Left lung (tissue), 14 donors: ENCODE measurements at regions of chr4 and their contacts with region 1.

Region 1: GRCh38 chr4:52983563-52984303 is 121.6 kb downstream of the RASL11B start:
- DNase-seq: peak in 2 of 4 donors; percentile 47 to 64
- ATAC-seq: peak; percentile 91
- H3K4me3 ChIP-seq: no peak overlapping the region
- H3K27ac ChIP-seq: no peak overlapping the region
- H3K4me1 ChIP-seq: peaks cover 0 to 6% of the 10 kb centered on the region in 2 donors
- H3K27me3 ChIP-seq: no peaks in the 10 kb centered on the region
- CTCF ChIP-seq: peak; percentile 64 to 69

Region 2: DNA sequence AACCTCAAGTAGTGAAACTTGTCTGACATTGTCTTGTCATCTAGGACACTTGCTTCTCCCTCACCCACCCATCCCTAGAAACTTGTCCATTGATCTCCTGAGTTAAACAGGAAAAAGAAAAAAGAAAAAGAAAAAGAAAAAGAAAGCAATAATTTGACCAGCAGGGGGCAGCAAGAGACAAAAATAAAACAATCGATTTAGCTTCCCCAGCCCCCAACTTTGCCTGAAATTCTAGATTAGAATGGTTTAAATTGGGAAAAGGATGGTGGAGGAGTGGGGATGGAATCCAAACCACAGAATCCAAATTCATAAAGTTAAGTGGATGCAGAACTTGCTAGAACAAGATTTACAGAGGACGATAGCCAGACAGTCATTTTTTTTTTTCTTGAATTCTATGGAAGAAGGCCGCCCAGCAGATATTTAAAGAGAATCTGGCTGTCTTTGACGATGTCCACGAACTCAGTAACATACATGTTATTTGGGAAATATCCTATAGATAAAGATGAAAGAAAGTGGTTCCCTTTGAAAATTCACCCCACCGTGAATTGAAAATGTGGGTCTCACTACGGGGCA is 607.5 kb before region 1 on chr4:
- intact Hi-C with region 1: loop called in 1 of 2 experiments (anchors 10 kb)
- DNase-seq: peak in 2 of 4 donors; percentile 51 to 58
- ATAC-seq: peak; percentile 21
- H3K4me3 ChIP-seq: no peak overlapping the region
- H3K27ac ChIP-seq: no peak overlapping the region
- H3K4me1 ChIP-seq: no peaks in the 10 kb centered on the region
- H3K27me3 ChIP-seq: no peaks in the 10 kb centered on the region
- CTCF ChIP-seq: peak; percentile 30 to 49

Region 3: DNA sequence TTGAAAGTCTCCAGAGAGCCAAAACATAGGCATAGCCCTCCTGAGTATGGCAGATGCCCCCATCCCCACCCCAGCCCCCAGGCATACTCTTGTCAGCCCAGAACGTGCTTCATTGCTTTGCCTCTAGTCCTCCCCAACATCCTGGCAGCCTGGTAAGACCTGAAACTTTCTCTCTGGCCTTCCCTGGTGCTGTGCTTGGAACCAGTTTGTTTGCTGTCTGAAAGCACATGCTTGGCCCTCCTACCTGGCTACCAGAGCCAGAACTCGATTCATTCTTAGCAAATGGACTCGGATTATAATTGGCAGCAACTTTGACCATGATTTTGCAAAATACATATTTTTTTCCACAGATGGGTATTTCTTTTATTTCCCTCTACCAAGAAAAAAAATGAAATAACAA is 572.8 kb before region 1 on chr4:
- intact Hi-C with region 1: no loop called
- DNase-seq: no peak
- ATAC-seq: no peak
- H3K4me3 ChIP-seq: no peak overlapping the region
- H3K27ac ChIP-seq: no peak overlapping the region
- H3K4me1 ChIP-seq: no peaks in the 10 kb centered on the region
- H3K27me3 ChIP-seq: no peaks in the 10 kb centered on the region
- CTCF ChIP-seq: no peak

Region 4: GRCh38 chr4:52545099-52546069 is 438.3 kb before region 1 on chr4:
- intact Hi-C with region 1: loop called in 1 of 2 experiments (anchors 5 kb)
- DNase-seq: peak; percentile 51 to 80 (median 60)
- ATAC-seq: peak; percentile 100
- H3K4me3 ChIP-seq: no peak overlapping the region
- H3K27ac ChIP-seq: no peak overlapping the region
- H3K4me1 ChIP-seq: no peaks in the 10 kb centered on the region
- H3K27me3 ChIP-seq: no peaks in the 10 kb centered on the region
- CTCF ChIP-seq: peak; percentile 87 to 91

Region 5: DNA sequence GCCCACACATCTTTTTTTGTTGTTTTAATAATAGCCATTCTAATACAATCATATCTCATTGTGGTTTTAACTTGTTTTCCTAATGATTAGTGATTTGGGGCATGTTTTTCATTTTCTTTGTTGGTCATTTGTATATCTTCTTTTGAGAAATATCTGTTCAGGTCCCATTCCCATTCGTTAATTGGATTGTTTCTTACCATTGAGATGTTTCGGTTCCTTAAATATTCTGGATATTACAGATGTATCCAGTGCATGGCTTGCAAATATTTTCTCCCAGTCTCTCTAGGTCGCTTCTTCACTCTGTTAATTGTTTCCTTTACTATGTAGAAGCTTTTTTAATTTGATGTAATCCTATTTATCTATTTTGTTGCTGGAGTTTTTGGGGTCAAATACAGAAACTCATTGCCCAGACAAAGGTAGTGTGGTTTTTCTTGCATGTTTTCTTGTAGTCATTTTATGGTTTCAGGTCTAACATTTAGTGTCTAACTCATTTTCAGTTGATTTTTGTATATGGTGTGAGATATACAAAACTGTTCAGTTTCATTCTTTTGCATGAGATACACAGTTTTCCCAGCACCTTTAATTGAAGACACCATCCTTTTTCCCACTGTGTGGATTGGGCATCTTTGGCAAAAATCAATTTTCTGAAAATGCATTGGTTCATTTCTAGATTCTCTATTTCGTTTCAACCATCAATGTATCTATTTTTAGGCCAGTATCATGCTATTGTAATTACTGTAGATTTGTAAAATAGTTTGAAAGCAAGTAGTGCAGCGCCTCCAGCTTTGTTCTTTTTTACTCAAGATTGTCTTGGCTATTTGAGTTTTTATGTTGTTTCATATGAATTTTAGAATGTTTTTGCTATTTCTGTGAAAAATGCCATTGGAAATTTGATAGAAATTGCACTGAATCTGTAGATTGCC is 186.2 kb after region 1 on chr4:
- intact Hi-C with region 1: no loop called
- DNase-seq: no peak
- ATAC-seq: no peak
- H3K4me3 ChIP-seq: no peak overlapping the region
- H3K27ac ChIP-seq: no peak overlapping the region
- H3K4me1 ChIP-seq: no peaks in the 10 kb centered on the region
- H3K27me3 ChIP-seq: no peaks in the 10 kb centered on the region
- CTCF ChIP-seq: no peak